ENCODE measurements at regions of chr4 and their contacts with region 1.

Region 1: GRCh38 chr4:57410331-57411052 is 300.3 kb upstream of the IGFBP7 start:
- DNase-seq: peak in 1 of 2 donors; percentile 80
- H3K4me3 ChIP-seq: no peak overlapping the region
- H3K27ac ChIP-seq: peak overlapping the region; percentile 82 to 85
- H3K4me1 ChIP-seq: peaks cover 3 to 14% of the 10 kb centered on the region in 2 donors
- H3K27me3 ChIP-seq: no peaks in the 10 kb centered on the region
- CTCF ChIP-seq: no peak

Region 2: DNA sequence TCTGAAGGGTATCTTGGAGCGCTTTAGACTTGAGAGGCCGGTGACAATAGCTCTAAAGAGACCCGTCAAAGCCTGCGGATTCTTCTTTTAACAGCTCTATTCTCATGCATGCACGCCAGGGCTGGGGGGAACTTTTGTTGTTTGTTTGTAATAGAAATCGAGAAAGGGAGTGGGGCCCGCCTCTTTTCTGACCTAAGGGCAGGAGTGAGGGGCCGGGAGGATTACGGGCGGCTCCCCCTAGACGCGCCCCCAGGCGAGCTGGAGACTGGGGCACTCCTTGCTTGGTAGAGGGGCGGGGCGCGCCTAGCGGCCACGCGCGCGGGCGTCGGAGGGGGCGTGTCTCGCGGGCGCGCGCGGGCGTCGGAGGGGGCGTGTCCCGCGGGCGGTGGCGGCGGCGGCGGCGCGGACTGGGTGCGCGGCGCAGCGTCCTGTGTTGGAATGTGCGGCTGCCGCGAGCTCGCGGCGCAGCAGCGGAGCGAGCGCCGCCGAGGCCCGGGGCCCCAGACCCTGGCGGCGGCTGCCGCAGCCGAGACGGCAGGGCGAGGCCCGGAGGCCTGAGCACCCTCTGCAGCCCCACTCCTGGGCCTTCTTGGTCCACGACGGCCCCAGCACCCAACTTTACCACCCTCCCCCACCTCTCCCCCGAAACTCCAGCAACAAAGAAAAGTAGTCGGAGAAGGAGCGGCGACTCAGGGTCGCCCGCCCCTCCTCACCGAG is 502.8 kb before region 1 on chr4 and contains the start of gene REST:
- intact Hi-C with region 1: loop called (anchors 5 kb)
- DNase-seq: peak in 1 of 2 donors; percentile 88
- H3K4me3 ChIP-seq: peak within 1 kb of the TSS; percentile 92 to 94
- H3K27ac ChIP-seq: peak within 1 kb of the TSS; percentile 81 to 88
- H3K4me1 ChIP-seq: peaks cover 0 to 12% of the 10 kb centered on the region in 2 donors
- H3K27me3 ChIP-seq: no peaks in the 10 kb centered on the region
- CTCF ChIP-seq: no peak
- total RNA-seq, gene REST: 86.5 TPM

Region 3: GRCh38 chr4:57020467-57021101 is 389.9 kb before region 1 on chr4:
- intact Hi-C with region 1: loop called (anchors 5 kb)
- DNase-seq: no peak
- H3K4me3 ChIP-seq: no peak overlapping the region
- H3K27ac ChIP-seq: peak overlapping the region in 1 of 2 donors; percentile 5
- H3K4me1 ChIP-seq: no peaks in the 10 kb centered on the region
- H3K27me3 ChIP-seq: no peaks in the 10 kb centered on the region
- CTCF ChIP-seq: no peak

Region 4: GRCh38 chr4:57163530-57164459 is 246.7 kb before region 1 on chr4:
- intact Hi-C with region 1: loop called (anchors 5 kb)
- DNase-seq: peak; percentile 26 to 89
- H3K4me3 ChIP-seq: peak overlapping the region; percentile 54 to 71
- H3K27ac ChIP-seq: peak overlapping the region; percentile 47 to 73
- H3K4me1 ChIP-seq: peaks cover 0 to 2% of the 10 kb centered on the region in 2 donors
- H3K27me3 ChIP-seq: no peaks in the 10 kb centered on the region
- CTCF ChIP-seq: peak; percentile 80 to 96 (median 84)

Region 5: DNA sequence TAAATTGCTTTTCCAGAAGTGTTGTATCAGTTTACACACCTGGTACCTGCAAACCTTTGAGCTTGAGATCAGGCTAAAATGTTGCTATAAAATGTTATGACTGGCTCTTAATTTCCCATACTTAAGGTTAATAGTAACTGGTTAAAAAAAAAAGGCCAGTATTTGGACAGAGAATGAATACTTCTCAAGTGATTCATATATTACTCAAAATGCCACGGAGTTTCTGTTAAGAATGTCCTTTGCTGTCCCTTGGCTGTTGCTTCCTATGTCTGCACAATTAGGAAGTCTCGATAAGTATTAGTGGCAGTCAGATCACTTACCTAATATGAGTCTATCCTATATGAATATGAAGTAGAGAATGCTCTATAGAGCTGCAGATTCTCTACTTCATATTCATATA is 68.1 kb before region 1 on chr4:
- intact Hi-C with region 1: loop called (anchors 5 kb)
- DNase-seq: no peak
- H3K4me3 ChIP-seq: no peak overlapping the region
- H3K27ac ChIP-seq: no peak overlapping the region
- H3K4me1 ChIP-seq: no peaks in the 10 kb centered on the region
- H3K27me3 ChIP-seq: no peaks in the 10 kb centered on the region
- CTCF ChIP-seq: no peak

Measured in ascending aorta (tissue), 2 donors.